Mammary epithelial cell (primary cell): ENCODE measurements at regions of chr19 and their contacts with region 1.

Region 1: GRCh38 chr19:15684831-15685230 is 11.9 kb downstream of the CYP4F12 start:
- DNase-seq: no peak
- H3K4me3 ChIP-seq: no peak overlapping the region
- H3K27ac ChIP-seq: no peak overlapping the region
- H3K4me1 ChIP-seq: no peaks in the 10 kb centered on the region
- H3K27me3 ChIP-seq: no peaks in the 10 kb centered on the region
- CTCF ChIP-seq: no peak

Region 2: GRCh38 chr19:15587663-15588062 is 97.2 kb before region 1 on chr19:
- CTCF ChIA-PET with region 1: no interaction called
- dilution Hi-C with region 1: no loop called
- in situ Hi-C with region 1: no loop called
- intact Hi-C with region 1: no loop called
- DNase-seq: no peak
- H3K4me3 ChIP-seq: no peak overlapping the region
- H3K27ac ChIP-seq: no peak overlapping the region
- H3K4me1 ChIP-seq: peaks cover 3% of the 10 kb centered on the region
- H3K27me3 ChIP-seq: peaks cover 5% of the 10 kb centered on the region
- CTCF ChIP-seq: no peak

Region 3: DNA sequence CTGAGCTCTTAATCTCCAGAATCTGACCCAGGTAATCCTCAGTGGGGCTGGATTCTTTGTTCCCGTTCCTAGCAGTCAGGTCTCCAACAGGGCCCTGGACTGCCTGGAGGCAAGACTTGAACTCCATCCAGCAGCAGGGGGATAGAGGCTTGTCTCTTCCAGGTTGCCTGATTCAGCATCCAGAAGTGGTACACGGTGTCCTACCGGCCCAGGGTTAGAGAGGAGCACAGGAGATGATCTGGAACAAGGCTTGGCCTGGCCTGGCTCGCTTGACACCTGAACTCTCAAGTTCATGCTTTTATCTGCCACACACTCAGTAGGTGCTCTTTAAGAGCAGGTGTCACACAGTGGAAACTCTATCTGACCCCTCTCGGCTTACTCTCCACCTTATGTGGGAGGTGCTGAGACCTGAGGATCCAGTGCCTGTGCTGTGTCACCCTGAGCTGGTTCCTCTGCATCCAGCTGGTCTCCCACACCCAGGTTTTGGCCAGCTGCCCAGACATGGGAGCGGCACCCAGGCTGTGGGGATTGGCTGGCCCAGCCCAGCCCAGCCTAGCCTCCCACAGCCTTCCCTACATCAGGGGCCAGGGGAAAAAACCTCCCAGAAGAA is 44.4 kb before region 1 on chr19 and contains the start of gene CYP4F3:
- CTCF ChIA-PET with region 1: no interaction called
- dilution Hi-C with region 1: loop called (anchors 5 kb)
- in situ Hi-C with region 1: no loop called
- intact Hi-C with region 1: no loop called
- DNase-seq: peak; percentile 95
- H3K4me3 ChIP-seq: no peak within 1 kb of the TSS
- H3K27ac ChIP-seq: peak within 1 kb of the TSS; percentile 22
- H3K4me1 ChIP-seq: peaks cover 24% of the 10 kb centered on the region
- H3K27me3 ChIP-seq: no peaks in the 10 kb centered on the region
- CTCF ChIP-seq: no peak
- total RNA-seq, gene CYP4F3: under 0.01 to 0.54 TPM